Activated CD8-positive, alpha-beta memory T cell treated with anti-CD3 and anti-CD28 coated beads, Interleukin-2, amount 10 ng/mL, durations not matched to agents 7 days and 5 days (primary cell): ENCODE measurements at regions of chr18 and their contacts with region 1.

Region 1: DNA sequence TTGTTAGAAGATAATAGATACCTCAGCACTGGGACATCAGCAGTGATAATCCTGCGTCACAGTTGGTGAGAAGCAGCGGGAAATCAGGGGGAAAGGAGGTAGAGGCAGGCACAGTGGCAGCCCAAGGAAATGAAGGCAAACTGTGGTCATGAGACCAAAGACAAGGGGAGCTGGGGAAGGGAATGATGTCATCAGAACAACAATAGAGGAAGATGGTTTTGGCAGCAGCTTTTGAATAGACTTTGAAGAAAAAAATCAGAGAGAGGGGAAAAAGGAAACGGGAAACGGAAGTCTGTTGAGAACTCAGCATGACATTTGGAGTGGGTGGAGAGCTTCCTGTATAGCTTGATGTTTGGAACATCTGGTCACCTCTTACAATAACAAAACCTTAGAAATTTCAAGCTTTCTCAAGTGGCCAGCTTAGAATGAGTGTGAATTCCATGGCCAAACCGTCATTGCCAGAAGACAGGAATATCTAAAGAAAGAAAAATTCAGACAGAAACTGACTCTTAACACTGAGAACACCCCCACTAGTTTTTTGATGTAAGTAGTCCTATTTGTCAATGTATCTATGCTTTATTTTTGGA is 18.4 kb upstream of the YES1 start:
- DNase-seq: no peak
- ATAC-seq: peak; percentile 57
- H3K4me3 Mint-ChIP-seq: peak overlapping the region; percentile 43
- H3K27ac Mint-ChIP-seq: peak overlapping the region; percentile 73
- H3K4me1 Mint-ChIP-seq: peaks cover 17% of the 10 kb centered on the region
- H3K27me3 Mint-ChIP-seq: peaks cover 7% of the 10 kb centered on the region

Region 2: GRCh38 chr18:623761-624620 is 206.4 kb before region 1 on chr18:
- CTCF ChIA-PET with region 1: interaction called, 79 read pairs
- DNase-seq: peak; percentile 75
- ATAC-seq: peak; percentile 83
- H3K4me3 Mint-ChIP-seq: no peak overlapping the region
- H3K27ac Mint-ChIP-seq: no peak overlapping the region
- H3K4me1 Mint-ChIP-seq: no peaks in the 10 kb centered on the region
- H3K27me3 Mint-ChIP-seq: peaks cover 36% of the 10 kb centered on the region

Region 3: GRCh38 chr18:712401-713134 is 117.8 kb before region 1 on chr18 and contains the start of gene ENOSF1:
- CTCF ChIA-PET with region 1: interaction called, 46 read pairs
- DNase-seq: peak; percentile 91
- ATAC-seq: peak; percentile 90
- H3K4me3 Mint-ChIP-seq: peak within 1 kb of the TSS; percentile 85
- H3K27ac Mint-ChIP-seq: peak within 1 kb of the TSS; percentile 87
- H3K4me1 Mint-ChIP-seq: peaks cover 58% of the 10 kb centered on the region
- H3K27me3 Mint-ChIP-seq: no peaks in the 10 kb centered on the region
- total RNA-seq, gene ENOSF1: 79.3 to 84.3 TPM

Region 4: GRCh38 chr18:754666-755065 is 75.7 kb before region 1 on chr18:
- CTCF ChIA-PET with region 1: interaction called, 14 read pairs
- DNase-seq: no peak
- ATAC-seq: no peak
- H3K4me3 Mint-ChIP-seq: no peak overlapping the region
- H3K27ac Mint-ChIP-seq: no peak overlapping the region
- H3K4me1 Mint-ChIP-seq: no peaks in the 10 kb centered on the region
- H3K27me3 Mint-ChIP-seq: no peaks in the 10 kb centered on the region

Region 5: GRCh38 chr18:812376-813171 is 17.8 kb before region 1 on chr18:
- CTCF ChIA-PET with region 1: interaction called, 69 read pairs
- DNase-seq: peak; percentile 89
- ATAC-seq: peak; percentile 69
- H3K4me3 Mint-ChIP-seq: peak overlapping the region; percentile 83
- H3K27ac Mint-ChIP-seq: peak overlapping the region; percentile 99
- H3K4me1 Mint-ChIP-seq: peaks cover 70% of the 10 kb centered on the region
- H3K27me3 Mint-ChIP-seq: no peaks in the 10 kb centered on the region

Region 6: GRCh38 chr18:886076-886475 is 55.7 kb after region 1 on chr18:
- CTCF ChIA-PET with region 1: no interaction called
- DNase-seq: no peak
- ATAC-seq: no peak
- H3K4me3 Mint-ChIP-seq: no peak overlapping the region
- H3K27ac Mint-ChIP-seq: no peak overlapping the region
- H3K4me1 Mint-ChIP-seq: no peaks in the 10 kb centered on the region
- H3K27me3 Mint-ChIP-seq: peaks cover 3% of the 10 kb centered on the region